Right ventricle myocardium inferior (tissue), 1 donor: ENCODE measurements at regions of chr19 and their contacts with region 1.

Region 1: DNA sequence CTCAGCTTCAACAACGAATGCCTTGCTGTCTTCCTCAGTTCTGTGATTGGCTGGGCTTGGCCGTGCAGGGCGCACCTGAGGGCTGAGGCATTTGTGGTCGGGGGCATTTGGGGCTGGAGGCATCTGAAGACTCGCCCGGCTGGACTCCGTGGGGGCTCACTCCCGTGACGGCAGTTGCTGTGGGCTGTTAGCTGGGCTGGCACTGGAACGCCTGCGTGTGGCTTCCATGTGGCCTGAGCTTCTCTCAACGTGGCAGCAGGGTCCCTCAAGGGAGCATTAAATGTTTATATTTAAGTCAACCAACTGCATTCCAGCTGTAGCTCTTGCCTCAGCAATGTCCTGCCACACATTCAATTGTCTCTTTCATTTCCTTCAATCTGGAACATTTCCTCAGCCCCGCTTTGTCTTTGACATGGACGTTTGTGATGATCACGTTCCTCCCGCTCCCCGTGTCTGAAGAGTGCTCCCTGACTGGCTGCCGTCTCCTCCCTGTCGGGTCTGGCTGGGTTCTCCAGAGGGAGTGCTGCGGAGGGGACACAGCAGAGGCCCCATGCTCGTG is 21.0 kb downstream of the CCDC8 start:
- DNase-seq: peak; percentile 44
- ATAC-seq: no peak

Region 2: GRCh38 chr19:46487802-46488445 is 95.6 kb after region 1 on chr19:
- intact Hi-C with region 1: loop called (anchors 1 kb)
- DNase-seq: peak; percentile 88
- ATAC-seq: peak; percentile 79

Region 3: DNA sequence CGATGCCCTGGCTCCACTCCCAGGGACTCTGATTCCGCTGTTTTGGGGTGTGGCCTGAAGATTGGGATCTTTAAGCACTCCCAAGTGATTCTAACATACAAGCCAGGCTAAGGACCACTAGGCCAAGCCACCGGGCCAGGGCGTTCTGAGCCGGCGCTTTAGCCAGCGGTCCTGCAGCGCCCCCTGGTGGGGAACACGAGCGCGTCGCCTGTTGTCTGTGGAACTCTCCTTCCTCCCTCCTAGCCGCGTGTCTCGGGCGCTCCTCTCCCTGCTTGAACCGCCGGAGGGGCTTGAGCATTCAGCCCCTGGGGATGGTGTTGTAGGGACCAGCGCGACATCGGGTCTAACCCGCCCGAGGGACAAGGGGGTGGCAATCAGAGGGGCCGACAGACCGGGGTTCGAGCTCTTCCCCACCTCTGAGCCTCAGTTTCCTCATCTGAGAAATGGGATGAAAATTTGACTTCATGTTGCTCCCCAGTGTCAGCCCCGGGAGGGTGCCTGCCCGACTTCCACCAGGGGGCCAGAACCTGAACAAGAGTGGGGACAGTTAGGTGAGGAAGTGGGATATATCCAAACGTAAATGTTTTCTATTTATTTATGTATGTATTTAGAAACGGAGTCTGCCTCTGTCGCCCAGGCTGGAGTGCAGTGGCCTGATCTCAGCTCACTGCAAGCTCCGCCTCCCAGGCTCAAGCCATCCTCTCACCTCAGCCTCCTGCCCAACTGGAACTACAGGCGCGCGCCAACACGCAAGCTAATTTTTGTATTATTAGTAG is 121.3 kb after region 1 on chr19:
- intact Hi-C with region 1: loop called (anchors 2 kb)
- DNase-seq: peak; percentile 84
- ATAC-seq: peak; percentile 92